Heart right ventricle (tissue), 16 donors: ENCODE measurements at regions of chr2 and their contacts with region 1.

Region 1: GRCh38 chr2:124810132-124810531 is 785.0 kb downstream of the CNTNAP5 start:
- DNase-seq: peak in 1 of 2 donors; percentile 39
- ATAC-seq: peak; percentile 56 to 86 (median 70)
- H3K4me3 ChIP-seq: no peak overlapping the region
- H3K27ac ChIP-seq: no peak overlapping the region
- H3K4me1 ChIP-seq: peaks cover 0 to 6% (median 0%) of the 10 kb centered on the region in 9 donors
- H3K27me3 ChIP-seq: no peaks in the 10 kb centered on the region
- CTCF ChIP-seq: peak in 7 of 9 donors; percentile 25 to 54 (median 42)

Region 2: GRCh38 chr2:124027182-124027581 is 783.0 kb before region 1 on chr2:
- intact Hi-C with region 1: loop called in 9 of 10 experiments (anchors 5 to 10 kb)
- DNase-seq: peak in 1 of 2 donors; percentile 6
- ATAC-seq: peak in 4 of 8 donors; percentile 50 to 73 (median 59)
- H3K4me3 ChIP-seq: no peak overlapping the region
- H3K27ac ChIP-seq: no peak overlapping the region
- H3K4me1 ChIP-seq: peaks cover 0 to 10% (median 0%) of the 10 kb centered on the region in 9 donors
- H3K27me3 ChIP-seq: peaks cover 9 to 57% (median 42%) of the 10 kb centered on the region in 7 donors
- CTCF ChIP-seq: peak; percentile 16 to 77 (median 66)